HAP-1 (cell line): ENCODE measurements at regions of chrX and their contacts with region 1.

Region 1: GRCh38 chrX:149962859-149963757 is 24.8 kb upstream of the EOLA2 start:
- DNase-seq: peak; percentile 54 to 63
- H3K4me3 ChIP-seq: no peak overlapping the region
- H3K4me1 ChIP-seq: no peaks in the 10 kb centered on the region
- H3K27me3 ChIP-seq: no peaks in the 10 kb centered on the region

Region 2: DNA sequence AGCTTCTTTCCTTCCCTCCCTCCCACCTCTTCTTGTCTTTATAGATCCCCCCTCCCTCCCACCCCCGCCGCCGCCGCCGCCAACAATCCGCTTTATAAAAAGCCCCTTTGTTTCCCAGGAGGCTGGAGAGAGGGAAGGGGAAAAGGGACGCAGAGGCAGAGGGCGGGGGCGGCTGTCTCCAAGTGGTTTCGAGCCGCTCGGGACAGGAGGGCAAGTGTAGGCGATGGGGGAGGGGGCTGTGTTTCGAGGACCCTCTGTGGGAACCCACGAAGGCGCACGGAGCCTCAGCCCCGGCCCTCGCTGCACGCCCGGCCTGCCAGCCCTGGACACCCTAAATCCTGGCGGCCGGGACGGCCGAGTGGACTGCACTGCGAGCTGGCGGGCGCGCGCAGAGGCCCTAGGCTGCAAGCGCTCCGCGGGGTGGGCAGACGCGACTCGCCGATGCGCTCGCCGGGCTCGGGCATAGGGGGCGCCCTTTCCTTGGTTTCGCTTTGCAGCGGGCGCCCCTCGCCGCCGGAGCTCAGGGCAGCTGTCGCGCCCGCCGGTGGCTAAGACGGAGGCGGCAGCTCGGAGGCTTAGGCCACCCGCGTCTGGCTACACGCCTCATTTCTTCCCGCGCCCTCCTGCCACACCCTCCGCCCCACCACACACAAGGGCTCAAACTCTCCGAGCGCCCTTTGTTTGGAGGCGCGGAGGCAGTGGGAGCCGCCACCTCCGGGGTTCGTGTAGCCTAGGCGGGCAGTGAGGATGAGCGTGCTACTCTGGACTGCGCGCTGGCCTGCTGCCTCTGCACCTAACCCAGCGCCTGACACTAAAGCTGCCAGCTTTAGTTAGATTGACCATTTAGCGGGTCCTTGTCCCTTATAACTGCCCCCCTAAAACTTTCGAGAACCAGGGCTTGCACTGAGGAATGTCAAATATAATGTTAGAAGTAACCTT is 402.2 kb after region 1 on chrX:
- in situ Hi-C with region 1: loop called (anchors 25 kb)
- DNase-seq: peak; percentile 67 to 88
- H3K4me3 ChIP-seq: peak overlapping the region; percentile 52
- H3K4me1 ChIP-seq: peaks cover 5% of the 10 kb centered on the region
- H3K27me3 ChIP-seq: no peaks in the 10 kb centered on the region

Region 3: GRCh38 chrX:150508451-150509367 is 545.6 kb after region 1 on chrX:
- in situ Hi-C with region 1: no loop called
- DNase-seq: no peak
- H3K4me3 ChIP-seq: no peak overlapping the region
- H3K4me1 ChIP-seq: peaks cover 13% of the 10 kb centered on the region
- H3K27me3 ChIP-seq: no peaks in the 10 kb centered on the region

Region 4: DNA sequence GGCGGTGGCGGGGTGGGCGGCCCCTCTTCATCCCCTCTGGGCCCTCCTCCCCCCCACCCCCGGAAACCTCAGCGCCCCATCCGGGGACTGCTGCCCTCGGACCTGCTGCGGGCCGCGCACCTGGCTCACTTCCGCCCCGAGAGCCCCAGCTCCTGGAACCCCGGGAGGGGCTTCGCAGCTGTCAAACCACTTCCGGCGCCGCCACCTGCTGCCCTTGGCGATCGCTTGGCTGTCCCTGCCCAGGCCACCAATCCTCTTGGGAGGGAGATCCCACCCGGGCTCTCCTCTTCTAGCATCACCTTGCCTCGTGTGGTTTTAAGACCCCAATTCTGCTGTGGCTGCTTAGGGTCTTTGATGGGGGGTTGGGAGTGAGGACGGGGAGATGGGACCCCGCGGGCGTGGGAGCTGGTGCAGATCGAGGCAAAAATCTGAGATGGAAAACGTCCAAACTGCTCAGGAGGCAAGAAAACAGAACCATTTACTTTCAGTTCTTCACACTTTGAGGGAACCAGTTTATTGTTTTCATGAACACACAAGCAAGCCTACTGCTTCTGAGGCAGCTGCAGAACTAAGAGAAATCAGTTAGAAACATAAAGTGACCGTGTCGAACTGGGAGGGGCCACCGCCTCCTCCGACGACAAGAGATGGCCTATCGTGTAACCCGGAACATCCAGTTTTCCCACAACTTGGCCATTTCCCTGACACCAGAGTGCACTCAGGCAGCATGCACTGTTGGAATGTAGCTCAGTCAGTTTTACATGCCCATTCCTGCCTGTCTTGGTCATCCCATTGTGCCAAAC is 730.9 kb after region 1 on chrX:
- in situ Hi-C with region 1: loop called (anchors 25 kb)
- DNase-seq: peak; percentile 33 to 84
- H3K4me3 ChIP-seq: peak overlapping the region; percentile 46
- H3K4me1 ChIP-seq: no peaks in the 10 kb centered on the region; the same call in 1 of the 2 replicates
- H3K27me3 ChIP-seq: no peaks in the 10 kb centered on the region